Endothelial cell of umbilical vein (primary cell): ENCODE measurements at regions of chr2 and their contacts with region 1.

Region 1: GRCh38 chr2:56382466-56382865 is 198.7 kb downstream of the CCDC85A start:
- DNase-seq: no peak
- H3K4me3 ChIP-seq: no peak overlapping the region
- H3K27ac ChIP-seq: no peak overlapping the region
- H3K4me1 ChIP-seq: no peaks in the 10 kb centered on the region
- H3K27me3 ChIP-seq: no peaks in the 10 kb centered on the region
- CTCF ChIP-seq: no peak
- POLR2A ChIP-seq: no peak

Region 2: DNA sequence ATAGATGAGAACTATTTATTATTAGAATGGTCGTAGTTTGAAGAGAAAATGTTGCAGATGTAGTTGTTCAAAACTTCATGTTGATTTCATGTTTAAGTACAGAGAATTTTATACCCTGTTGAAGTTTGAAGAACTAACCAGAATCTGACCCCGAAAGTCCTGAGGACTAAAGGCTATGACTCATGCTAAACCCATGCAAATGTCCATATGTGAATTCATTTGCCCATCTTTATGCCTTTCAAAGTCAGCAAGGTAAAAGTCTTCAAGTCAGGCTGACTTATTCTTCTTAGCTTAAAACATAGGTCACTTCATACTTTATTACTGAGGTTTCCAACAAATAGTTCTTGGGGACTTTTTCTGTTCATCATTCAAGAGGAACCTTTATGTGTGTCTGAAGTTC is 13.2 kb before region 1 on chr2:
- CTCF ChIA-PET with region 1: no interaction called
- POLR2A ChIA-PET with region 1: no interaction called
- dilution Hi-C with region 1: no loop called
- intact Hi-C with region 1: no loop called
- DNase-seq: no peak
- H3K4me3 ChIP-seq: no peak overlapping the region
- H3K27ac ChIP-seq: no peak overlapping the region
- H3K4me1 ChIP-seq: peaks cover 3% of the 10 kb centered on the region
- H3K27me3 ChIP-seq: no peaks in the 10 kb centered on the region
- CTCF ChIP-seq: no peak
- POLR2A ChIP-seq: no peak

Region 3: DNA sequence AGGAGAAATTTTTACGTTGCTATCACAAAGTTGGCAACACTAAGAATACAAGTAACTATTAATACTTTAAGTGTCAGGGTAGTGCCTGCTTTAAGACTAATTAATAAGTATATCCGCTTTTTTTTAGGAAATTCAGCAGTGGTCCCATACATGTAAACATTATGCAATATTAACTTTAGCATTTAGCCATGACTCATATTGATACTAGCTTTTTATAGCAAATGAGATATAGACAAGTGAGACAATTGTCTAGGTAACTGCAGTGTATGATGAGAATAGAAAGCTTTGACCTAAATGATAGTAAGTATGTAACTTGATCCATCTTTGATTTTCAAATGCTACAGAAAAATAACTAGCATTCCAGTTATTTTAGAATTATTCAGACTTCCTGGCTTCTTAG is 1636.7 kb after region 1 on chr2:
- CTCF ChIA-PET with region 1: no interaction called
- POLR2A ChIA-PET with region 1: no interaction called
- dilution Hi-C with region 1: no loop called
- intact Hi-C with region 1: loop called (anchors 5 kb)
- DNase-seq: no peak
- H3K4me3 ChIP-seq: no peak overlapping the region
- H3K27ac ChIP-seq: no peak overlapping the region
- H3K4me1 ChIP-seq: no peaks in the 10 kb centered on the region
- H3K27me3 ChIP-seq: no peaks in the 10 kb centered on the region
- CTCF ChIP-seq: no peak
- POLR2A ChIP-seq: no peak